ENCODE measurements at regions of chr6 and their contacts with region 1.

Region 1: DNA sequence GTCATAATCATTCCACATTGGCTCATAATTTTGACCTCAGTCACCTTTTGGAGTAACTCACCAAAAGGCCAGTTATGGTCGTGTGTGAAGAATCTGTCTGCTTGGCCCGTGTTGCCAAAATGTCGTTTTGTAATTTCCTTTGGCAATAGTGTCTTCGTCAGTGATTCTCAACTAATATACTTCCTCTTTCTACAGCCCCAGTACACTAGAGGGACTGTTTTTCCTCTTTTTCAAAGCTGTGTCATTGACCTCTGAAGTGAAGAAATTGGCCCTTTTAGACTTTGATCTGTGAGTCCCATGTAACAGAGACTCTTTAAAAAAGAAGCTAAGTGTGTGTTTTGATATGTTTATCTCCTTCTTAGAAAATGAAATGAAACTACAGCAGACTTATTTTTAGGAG is 5.2 kb downstream of the FOXO3 start:
- DNase-seq: no peak
- H3K4me3 Mint-ChIP-seq: no peak overlapping the region
- H3K27ac Mint-ChIP-seq: peak overlapping the region; percentile 70
- H3K4me1 Mint-ChIP-seq: peaks cover 68% of the 10 kb centered on the region
- H3K27me3 Mint-ChIP-seq: no peaks in the 10 kb centered on the region

Region 2: GRCh38 chr6:108581237-108581931 is 15.5 kb after region 1 on chr6:
- CTCF ChIA-PET with region 1: interaction called, 3 read pairs
- POLR2A ChIA-PET with region 1: no interaction called
- intact Hi-C with region 1: loop called (anchors 1 kb)
- DNase-seq: no peak
- H3K4me3 Mint-ChIP-seq: no peak overlapping the region
- H3K27ac Mint-ChIP-seq: peak overlapping the region; percentile 16
- H3K4me1 Mint-ChIP-seq: peaks cover 59% of the 10 kb centered on the region
- H3K27me3 Mint-ChIP-seq: no peaks in the 10 kb centered on the region

Region 3: DNA sequence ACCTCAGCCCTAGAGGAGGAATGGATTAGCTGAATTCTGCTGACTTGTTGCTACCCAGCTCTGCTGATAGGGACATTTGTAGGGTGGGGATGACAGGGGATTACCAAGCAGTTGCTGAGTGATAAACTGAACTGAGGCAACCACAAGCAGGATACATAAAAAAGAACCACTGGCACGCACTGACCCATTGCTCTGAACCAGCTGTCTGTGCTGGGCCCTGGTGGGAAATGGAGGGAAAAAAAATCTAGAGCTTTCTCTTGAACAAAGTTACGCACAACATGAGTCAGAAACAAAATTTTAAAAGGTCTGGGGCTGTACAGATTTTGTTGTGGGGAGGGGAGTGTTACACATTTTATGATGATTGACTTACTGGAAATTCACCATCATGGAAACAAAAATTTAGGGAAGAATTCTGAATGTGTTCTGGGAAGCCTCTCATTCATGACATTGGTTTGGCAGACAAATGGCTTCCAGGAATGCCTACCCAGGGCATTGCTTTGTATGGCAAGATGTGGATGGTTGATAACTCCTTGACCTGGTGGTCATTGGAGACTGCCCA is 32.5 kb after region 1 on chr6:
- CTCF ChIA-PET with region 1: no interaction called
- POLR2A ChIA-PET with region 1: interaction called, 4 read pairs
- intact Hi-C with region 1: loop called (anchors 1 kb)
- DNase-seq: peak; percentile 64
- H3K4me3 Mint-ChIP-seq: no peak overlapping the region
- H3K27ac Mint-ChIP-seq: peak overlapping the region; percentile 44
- H3K4me1 Mint-ChIP-seq: peaks cover 19% of the 10 kb centered on the region
- H3K27me3 Mint-ChIP-seq: no peaks in the 10 kb centered on the region

Region 4: DNA sequence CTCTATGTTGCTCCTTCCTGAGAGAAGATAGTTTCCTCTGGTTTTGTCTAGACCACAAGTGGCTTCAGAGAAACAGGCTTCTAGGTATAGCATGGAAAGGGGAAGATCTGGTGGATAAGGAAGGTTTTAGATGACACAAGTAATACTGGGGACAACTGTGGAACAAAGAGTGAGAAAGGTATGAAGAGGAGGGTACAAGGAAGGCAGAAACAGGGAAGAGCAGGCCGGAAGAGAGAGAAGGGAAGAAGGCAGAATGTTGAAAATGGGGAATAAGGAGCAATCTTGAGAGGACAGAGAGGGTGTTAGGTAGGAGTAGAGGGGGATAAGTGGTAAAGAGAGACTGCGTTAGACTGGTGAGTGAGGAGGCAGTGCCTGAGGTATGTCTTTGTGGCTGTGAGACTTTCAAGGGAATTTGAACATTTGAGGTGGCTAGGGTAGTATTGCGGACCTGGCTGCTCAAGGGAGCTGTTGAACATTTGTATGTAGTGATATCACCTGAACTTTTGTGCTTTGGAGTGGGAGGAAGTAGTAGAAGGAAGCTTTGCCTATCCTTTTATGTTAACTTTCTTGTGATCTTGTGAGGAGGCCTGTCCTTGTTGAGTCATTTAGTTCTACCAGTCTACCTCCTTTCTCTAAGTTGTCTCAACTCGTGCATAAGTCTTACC is 64.3 kb after region 1 on chr6:
- CTCF ChIA-PET with region 1: no interaction called
- POLR2A ChIA-PET with region 1: no interaction called
- intact Hi-C with region 1: loop called (anchors 1 kb)
- DNase-seq: peak; percentile 39
- H3K4me3 Mint-ChIP-seq: no peak overlapping the region
- H3K27ac Mint-ChIP-seq: peak overlapping the region; percentile 21
- H3K4me1 Mint-ChIP-seq: peaks cover 61% of the 10 kb centered on the region
- H3K27me3 Mint-ChIP-seq: no peaks in the 10 kb centered on the region

Region 5: GRCh38 chr6:108667993-108668392 is 102.1 kb after region 1 on chr6:
- CTCF ChIA-PET with region 1: no interaction called
- POLR2A ChIA-PET with region 1: no interaction called
- intact Hi-C with region 1: loop called (anchors 5 kb)
- DNase-seq: no peak
- H3K4me3 Mint-ChIP-seq: no peak overlapping the region
- H3K27ac Mint-ChIP-seq: no peak overlapping the region
- H3K4me1 Mint-ChIP-seq: peaks cover 56% of the 10 kb centered on the region
- H3K27me3 Mint-ChIP-seq: no peaks in the 10 kb centered on the region

Measured in activated CD4-positive, alpha-beta memory T cell treated with anti-CD3 and anti-CD28 coated beads for 36 hours (primary cell).